Spleen (tissue), 13 donors: ENCODE measurements at regions of chr5 and their contacts with region 1.

Region 1: GRCh38 chr5:157948738-157949410 is 89.9 kb upstream of the CLINT1 start:
- DNase-seq: peak; percentile 86
- H3K4me3 ChIP-seq: peak overlapping the region in 1 of 8 donors; percentile 22
- H3K27ac ChIP-seq: no peak overlapping the region
- H3K4me1 ChIP-seq: peaks cover 0 to 10% (median 7%) of the 10 kb centered on the region in 6 donors
- H3K27me3 ChIP-seq: peaks cover 0 to 21% (median 0%) of the 10 kb centered on the region in 7 donors
- CTCF ChIP-seq: peak; percentile 55 to 92 (median 85)
- POLR2A ChIP-seq: no peak

Region 2: DNA sequence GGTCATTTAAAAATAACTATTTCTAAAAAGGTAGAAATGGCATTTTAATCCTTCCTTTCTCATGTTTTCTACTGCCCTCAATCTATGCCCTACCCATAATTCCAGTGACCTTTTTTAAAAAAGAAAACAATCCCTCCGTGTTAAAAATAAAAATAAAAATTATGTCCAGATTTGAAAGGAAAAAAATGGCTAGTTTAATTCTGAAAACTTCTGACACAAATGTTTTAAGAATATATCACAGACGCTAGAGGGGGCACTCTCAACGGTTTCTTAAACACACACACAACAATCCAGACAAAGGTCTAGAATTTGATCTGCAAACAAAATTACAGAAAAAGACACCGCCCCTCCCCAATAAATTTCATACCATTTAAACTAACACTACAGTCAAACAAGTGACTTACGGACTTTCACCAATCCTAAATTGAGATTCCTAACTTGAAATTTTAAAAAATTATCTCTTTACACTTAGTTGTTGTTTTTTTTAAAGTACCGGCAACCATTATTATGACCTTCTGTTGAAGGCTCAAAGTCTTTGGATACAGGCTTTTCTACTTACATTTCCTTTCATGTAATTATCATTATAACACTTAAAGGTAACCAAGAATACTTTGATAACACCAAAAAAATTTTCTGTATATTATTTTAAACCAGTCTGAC is 128.2 kb before region 1 on chr5:
- intact Hi-C with region 1: loop called (anchors 2 kb)
- DNase-seq: no peak
- H3K4me3 ChIP-seq: no peak overlapping the region
- H3K27ac ChIP-seq: no peak overlapping the region
- H3K4me1 ChIP-seq: peaks cover 4 to 41% (median 14%) of the 10 kb centered on the region in 6 donors
- H3K27me3 ChIP-seq: no peaks in the 10 kb centered on the region
- CTCF ChIP-seq: peak in 7 of 11 experiments; percentile 25 to 50 (median 38)
- POLR2A ChIP-seq: no peak